ENCODE measurements at regions of chr11 and their contacts with region 1.

Region 1: DNA sequence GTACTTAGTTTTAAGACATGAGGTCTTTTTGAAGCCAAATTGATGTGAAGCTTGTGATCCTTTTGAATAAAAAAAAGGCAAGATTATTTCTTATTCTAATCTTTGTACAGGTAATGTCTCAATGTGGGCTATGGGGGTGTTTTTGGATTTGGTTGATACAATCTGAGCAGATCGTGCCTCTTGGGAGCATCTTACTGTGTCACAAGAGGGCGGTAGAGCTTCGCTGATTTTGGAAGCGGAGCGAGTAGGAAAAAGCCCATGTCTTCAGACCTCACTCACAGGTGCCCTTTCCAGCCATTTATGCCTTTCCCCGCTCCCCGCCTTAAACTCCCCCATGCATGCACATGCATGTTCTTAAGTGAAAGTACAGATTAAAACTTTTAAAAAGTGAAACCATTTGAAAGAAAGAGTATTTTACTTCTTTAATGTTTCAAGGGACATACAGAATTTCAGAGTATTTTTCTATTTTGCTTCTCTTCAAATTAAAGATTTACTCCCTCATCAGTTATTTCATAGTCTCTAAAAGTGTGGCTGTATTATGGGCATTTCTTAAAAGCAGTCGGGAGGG is 18.8 kb downstream of the DDX25 start:
- DNase-seq: peak; percentile 64
- ATAC-seq: peak; percentile 94
- H3K4me3 ChIP-seq: no peak overlapping the region
- H3K27ac ChIP-seq: no peak overlapping the region
- H3K4me1 ChIP-seq: no peaks in the 10 kb centered on the region
- H3K27me3 ChIP-seq: peaks cover 15% of the 10 kb centered on the region; the same call in 1 of the 2 replicates
- CTCF ChIP-seq: peak; percentile 95

Region 2: DNA sequence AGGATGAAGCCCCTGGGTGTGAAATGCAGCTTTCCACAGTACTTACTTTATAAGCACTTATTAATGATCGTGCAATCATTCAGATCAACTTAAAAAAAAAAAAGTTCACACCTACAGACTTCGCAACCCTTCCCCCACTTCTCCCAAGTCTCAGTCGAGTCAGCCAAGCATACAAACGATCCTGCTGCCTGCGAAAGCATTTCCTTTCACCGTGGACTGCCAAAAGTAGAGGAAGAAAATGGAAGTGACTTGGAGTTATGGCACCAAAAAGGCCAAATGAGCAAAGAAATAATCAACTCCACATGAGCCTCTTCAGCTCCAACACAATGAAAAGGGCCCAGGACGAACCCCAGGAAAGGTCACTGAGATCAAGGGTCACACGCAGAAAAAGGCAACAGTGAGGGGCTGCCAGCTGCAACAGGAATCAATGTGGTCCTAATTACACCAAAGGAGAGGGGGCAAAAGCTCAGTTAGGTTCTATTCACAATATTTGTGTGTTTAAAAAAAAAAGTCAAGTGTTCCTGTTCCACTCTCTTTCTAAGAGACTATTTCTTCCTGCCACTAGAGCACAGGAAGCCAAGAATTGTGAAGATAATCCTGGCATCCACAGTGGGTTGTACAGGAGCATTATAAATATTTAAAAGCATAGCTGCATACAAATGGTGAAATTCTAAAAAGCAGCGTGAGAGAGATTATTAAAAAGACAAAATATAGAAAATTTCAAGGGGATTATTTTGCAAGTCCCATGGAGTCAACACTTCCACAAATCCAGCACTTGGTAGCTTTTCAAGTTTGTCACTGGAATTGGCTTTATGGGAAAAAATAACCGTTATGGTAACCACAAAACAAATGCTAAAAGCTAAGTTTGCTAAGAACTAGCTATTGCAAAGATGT is 111.2 kb after region 1 on chr11:
- CTCF ChIA-PET with region 1: no interaction called
- POLR2A ChIA-PET with region 1: no interaction called
- in situ Hi-C with region 1: no loop called
- intact Hi-C with region 1: no loop called
- DNase-seq: no peak
- ATAC-seq: no peak
- H3K4me3 ChIP-seq: no peak overlapping the region
- H3K27ac ChIP-seq: no peak overlapping the region
- H3K4me1 ChIP-seq: no peaks in the 10 kb centered on the region
- H3K27me3 ChIP-seq: peaks cover 6% of the 10 kb centered on the region; the same call in 1 of the 2 replicates
- CTCF ChIP-seq: no peak

Region 3: GRCh38 chr11:126194121-126194543 is 271.0 kb after region 1 on chr11:
- CTCF ChIA-PET with region 1: interaction called, 3 read pairs
- POLR2A ChIA-PET with region 1: no interaction called
- in situ Hi-C with region 1: no loop called
- intact Hi-C with region 1: loop called (anchors 1 kb)
- DNase-seq: no peak
- ATAC-seq: peak; percentile 72
- H3K4me3 ChIP-seq: no peak overlapping the region
- H3K27ac ChIP-seq: no peak overlapping the region
- H3K4me1 ChIP-seq: peaks cover 3% of the 10 kb centered on the region; the same call in 1 of the 2 replicates
- H3K27me3 ChIP-seq: no peaks in the 10 kb centered on the region
- CTCF ChIP-seq: peak; percentile 84

Region 4: DNA sequence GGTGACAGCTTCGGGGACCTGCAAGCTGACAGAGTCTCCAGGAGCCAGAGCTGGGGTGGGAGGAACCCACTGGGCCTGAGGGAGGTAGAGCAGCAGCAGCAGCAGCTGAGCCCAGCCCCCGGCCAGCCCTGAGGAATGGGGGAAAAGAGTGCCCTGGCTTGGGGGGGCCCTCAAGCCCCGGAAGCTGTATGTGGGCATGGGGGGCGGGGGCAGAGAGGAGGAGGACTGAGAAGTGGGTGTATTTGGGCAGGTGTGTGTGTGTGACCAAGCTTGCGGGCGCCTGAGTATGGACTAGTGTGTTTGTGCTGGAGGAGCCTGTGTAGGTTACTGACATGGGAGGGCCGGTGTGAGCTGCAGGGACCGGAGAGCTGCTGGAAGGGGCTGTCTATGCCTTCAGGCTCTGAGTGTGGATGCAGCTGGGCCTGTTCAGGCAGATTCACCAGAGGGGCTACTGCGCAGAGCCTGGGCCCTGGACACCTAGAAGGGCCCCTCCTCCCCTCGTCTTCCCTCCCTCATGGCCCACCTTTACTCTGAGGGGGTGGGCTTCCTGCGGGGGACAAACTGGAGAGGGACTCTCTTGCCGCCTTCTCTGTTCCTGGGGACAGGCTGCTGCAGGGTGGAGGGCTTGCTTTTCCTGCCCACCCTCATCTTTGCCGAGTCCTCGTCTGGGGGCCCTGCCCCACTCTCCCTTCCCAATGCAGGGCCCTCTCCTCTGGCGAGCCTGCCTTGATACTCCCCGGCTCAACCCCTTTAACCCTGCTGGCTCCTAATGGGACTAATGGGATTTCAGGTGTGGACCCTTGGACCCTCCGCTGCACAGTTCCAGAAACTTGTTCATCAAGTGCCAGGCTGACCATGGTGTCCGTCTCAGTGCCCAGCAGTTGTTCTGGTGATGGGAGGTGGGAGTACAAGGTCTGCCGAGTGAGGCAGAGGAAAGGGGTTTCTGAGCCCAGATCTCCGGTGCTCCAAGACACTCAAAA is 460.5 kb after region 1 on chr11:
- CTCF ChIA-PET with region 1: interaction called, 10 read pairs
- POLR2A ChIA-PET with region 1: no interaction called
- in situ Hi-C with region 1: no loop called
- intact Hi-C with region 1: no loop called
- DNase-seq: no peak
- ATAC-seq: peak; percentile 46
- H3K4me3 ChIP-seq: no peak overlapping the region
- H3K27ac ChIP-seq: no peak overlapping the region
- H3K4me1 ChIP-seq: peaks cover 21% of the 10 kb centered on the region
- H3K27me3 ChIP-seq: no peaks in the 10 kb centered on the region
- CTCF ChIP-seq: no peak